HEK293 (cell line): ENCODE measurements at regions of chr4 and their contacts with region 1.

Region 1: GRCh38 chr4:72326692-72327632 is 242.1 kb downstream of the ADAMTS3 start:
- H3K4me3 ChIP-seq: no peak overlapping the region
- H3K27ac ChIP-seq: no peak overlapping the region
- H3K4me1 ChIP-seq: peaks cover 10% of the 10 kb centered on the region; the same call in 1 of the 2 replicates
- CTCF ChIP-seq: no peak

Region 2: DNA sequence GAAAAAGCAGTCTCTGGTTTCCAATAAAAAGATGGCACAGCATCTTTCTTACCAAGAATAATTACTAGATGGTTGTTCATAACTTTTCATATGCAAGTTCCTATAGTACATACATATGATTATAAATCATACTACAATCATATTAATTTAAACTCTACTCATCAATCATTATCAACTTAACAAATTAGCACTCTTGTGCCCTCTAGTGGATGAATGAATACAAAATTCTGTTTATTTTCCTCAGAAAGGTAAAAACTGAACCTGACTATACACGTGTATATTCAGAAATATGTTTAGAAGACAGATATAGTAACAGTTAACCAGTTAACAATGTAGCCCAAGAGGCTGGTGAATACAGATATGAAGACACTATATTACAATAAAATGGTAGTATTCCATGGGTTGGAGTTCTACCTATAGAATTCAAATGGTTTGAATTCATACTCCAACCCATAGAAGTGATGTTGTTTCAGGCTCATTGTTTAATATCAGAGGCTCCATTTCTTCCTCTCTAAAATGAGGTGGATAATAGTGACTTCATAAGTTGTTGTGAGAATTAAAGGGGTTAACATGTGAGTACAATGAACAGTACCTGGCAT is 142.0 kb after region 1 on chr4:
- CTCF ChIA-PET with region 1: interaction called, 45 read pairs
- POLR2A ChIA-PET with region 1: no interaction called
- H3K4me3 ChIP-seq: no peak overlapping the region
- H3K27ac ChIP-seq: no peak overlapping the region
- H3K4me1 ChIP-seq: no peaks in the 10 kb centered on the region
- CTCF ChIP-seq: no peak